ENCODE measurements at regions of chr1 and their contacts with region 1.

Region 1: GRCh38 chr1:25904943-25905679 is 1.1 kb downstream of the STMN1 start:
- DNase-seq: peak; percentile 96
- ATAC-seq: peak; percentile 96 to 97
- H3K4me3 ChIP-seq: peak overlapping the region; percentile 80
- H3K27ac ChIP-seq: peak overlapping the region; percentile 49
- H3K4me1 ChIP-seq: peaks cover 20% of the 10 kb centered on the region
- H3K27me3 ChIP-seq: no peaks in the 10 kb centered on the region
- CTCF ChIP-seq: no peak

Region 2: GRCh38 chr1:25997828-25998761 is 93.0 kb after region 1 on chr1 and contains the start of gene PAFAH2:
- intact Hi-C with region 1: loop called (anchors 5 kb)
- DNase-seq: peak; percentile 97
- ATAC-seq: peak; percentile 99 to 100
- H3K4me3 ChIP-seq: peak within 1 kb of the TSS; percentile 76
- H3K27ac ChIP-seq: peak within 1 kb of the TSS; percentile 93
- H3K4me1 ChIP-seq: peaks cover 20% of the 10 kb centered on the region
- H3K27me3 ChIP-seq: no peaks in the 10 kb centered on the region
- CTCF ChIP-seq: peak; percentile 98
- total RNA-seq, gene PAFAH2: 19.4 TPM